PC-3 (cell line): ENCODE measurements at regions of chr16 and their contacts with region 1.

Region 1: GRCh38 chr16:75764154-75764768 is 38.0 kb upstream of the CPHXL start:
- DNase-seq: peak; percentile 64
- ATAC-seq: peak; percentile 84
- H3K4me3 ChIP-seq: no peak overlapping the region
- H3K27ac ChIP-seq: no peak overlapping the region
- H3K4me1 ChIP-seq: no peaks in the 10 kb centered on the region
- H3K27me3 ChIP-seq: 0 out of 2 replicates have a peak, but pooled peaks cover 5% of the 10 kb centered on the region
- CTCF ChIP-seq: peak; percentile 75

Region 2: GRCh38 chr16:75471723-75472633 is 292.3 kb before region 1 on chr16:
- CTCF ChIA-PET with region 1: no interaction called
- POLR2A ChIA-PET with region 1: no interaction called
- intact Hi-C with region 1: loop called (anchors 2 kb)
- DNase-seq: peak; percentile 69
- ATAC-seq: peak; percentile 99
- H3K4me3 ChIP-seq: no peak overlapping the region
- H3K27ac ChIP-seq: no peak overlapping the region
- H3K4me1 ChIP-seq: peaks cover 5% of the 10 kb centered on the region
- H3K27me3 ChIP-seq: no peaks in the 10 kb centered on the region
- CTCF ChIP-seq: peak; percentile 83

Region 3: DNA sequence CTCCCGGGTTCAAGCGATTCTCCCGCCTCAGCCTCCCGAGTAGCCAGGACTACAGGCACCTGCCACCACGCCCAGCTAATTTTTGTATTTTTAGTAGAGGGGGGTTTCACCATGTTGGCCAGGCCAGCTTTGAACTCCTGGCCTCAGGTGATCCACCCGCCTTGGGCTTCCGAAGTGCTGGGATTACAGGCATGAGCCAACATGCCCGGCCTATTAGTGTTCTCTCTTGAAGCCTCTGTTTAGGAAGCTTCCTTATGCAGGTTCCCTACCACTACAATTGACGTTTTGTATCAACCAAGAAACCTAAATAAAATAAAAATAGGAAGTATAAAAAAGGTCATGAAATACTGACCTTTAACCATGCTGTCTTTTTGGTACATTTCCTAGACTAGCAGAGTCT is 244.4 kb before region 1 on chr16:
- CTCF ChIA-PET with region 1: interaction called, 13 read pairs
- POLR2A ChIA-PET with region 1: no interaction called
- intact Hi-C with region 1: no loop called
- DNase-seq: no peak
- ATAC-seq: no peak
- H3K4me3 ChIP-seq: no peak overlapping the region
- H3K27ac ChIP-seq: no peak overlapping the region
- H3K4me1 ChIP-seq: no peaks in the 10 kb centered on the region
- H3K27me3 ChIP-seq: no peaks in the 10 kb centered on the region
- CTCF ChIP-seq: no peak

Region 4: GRCh38 chr16:75647492-75648264 is 116.6 kb before region 1 on chr16 and contains the starts of genes KARS1 and TERF2IP:
- CTCF ChIA-PET with region 1: no interaction called
- POLR2A ChIA-PET with region 1: no interaction called
- intact Hi-C with region 1: loop called (anchors 2 kb)
- DNase-seq: peak; percentile 90
- ATAC-seq: peak; percentile 91
- H3K4me3 ChIP-seq: peak within 1 kb of the TSS; percentile 100
- H3K27ac ChIP-seq: peak within 1 kb of the TSS; percentile 50
- H3K4me1 ChIP-seq: peaks cover 21% of the 10 kb centered on the region
- H3K27me3 ChIP-seq: no peaks in the 10 kb centered on the region
- CTCF ChIP-seq: no peak
- total RNA-seq, gene KARS1: 137 and 148 TPM in 2 replicates
- total RNA-seq, gene TERF2IP: 25.7 and 27.2 TPM in 2 replicates

Region 5: GRCh38 chr16:76360404-76360803 is 596.1 kb after region 1 on chr16:
- CTCF ChIA-PET with region 1: no interaction called
- POLR2A ChIA-PET with region 1: no interaction called
- intact Hi-C with region 1: no loop called
- DNase-seq: no peak
- ATAC-seq: no peak
- H3K4me3 ChIP-seq: no peak overlapping the region
- H3K27ac ChIP-seq: no peak overlapping the region
- H3K4me1 ChIP-seq: no peaks in the 10 kb centered on the region
- H3K27me3 ChIP-seq: peaks cover 4% of the 10 kb centered on the region
- CTCF ChIP-seq: no peak